IMR-90 (cell line): ENCODE measurements at regions of chr6 and their contacts with region 1.

Region 1: DNA sequence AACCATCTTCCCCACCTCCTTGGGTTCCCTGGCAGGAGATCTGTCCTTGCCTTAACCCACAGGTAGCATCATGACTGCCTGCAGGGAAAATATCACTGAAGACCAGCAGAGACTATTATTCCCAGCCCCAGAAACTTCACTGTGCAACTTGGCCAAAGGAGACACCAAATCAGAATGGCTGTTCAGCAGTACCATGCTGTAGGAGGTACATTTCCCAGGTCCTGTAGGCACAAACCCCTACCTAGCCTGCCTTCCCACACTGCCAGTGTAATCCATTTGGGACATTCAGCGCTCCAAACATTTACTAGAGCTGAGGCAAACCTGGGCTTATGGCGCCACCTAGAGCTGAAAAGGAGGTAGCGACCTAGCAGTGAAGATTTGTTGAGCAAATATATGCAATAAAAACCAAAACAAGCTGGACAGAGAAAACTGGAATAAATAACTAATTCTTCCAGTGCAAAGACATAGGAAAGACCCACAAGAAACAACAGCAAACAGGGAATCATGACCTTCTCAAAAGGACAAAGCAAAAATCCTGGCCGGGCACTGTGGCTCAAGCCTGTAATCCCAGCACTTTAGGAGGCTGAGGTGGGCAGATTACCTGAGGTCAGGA is 60.3 kb downstream of the VTA1 start:
- DNase-seq: peak; percentile 64
- ATAC-seq: peak; percentile 90
- H3K4me3 ChIP-seq: no peak overlapping the region
- H3K27ac ChIP-seq: no peak overlapping the region
- H3K4me1 ChIP-seq: no peaks in the 10 kb centered on the region
- H3K27me3 ChIP-seq: no peaks in the 10 kb centered on the region
- CTCF ChIP-seq: peak; percentile 89
- POLR2A ChIP-seq: no peak
- RAD21 ChIP-seq: peak; percentile 93

Region 2: DNA sequence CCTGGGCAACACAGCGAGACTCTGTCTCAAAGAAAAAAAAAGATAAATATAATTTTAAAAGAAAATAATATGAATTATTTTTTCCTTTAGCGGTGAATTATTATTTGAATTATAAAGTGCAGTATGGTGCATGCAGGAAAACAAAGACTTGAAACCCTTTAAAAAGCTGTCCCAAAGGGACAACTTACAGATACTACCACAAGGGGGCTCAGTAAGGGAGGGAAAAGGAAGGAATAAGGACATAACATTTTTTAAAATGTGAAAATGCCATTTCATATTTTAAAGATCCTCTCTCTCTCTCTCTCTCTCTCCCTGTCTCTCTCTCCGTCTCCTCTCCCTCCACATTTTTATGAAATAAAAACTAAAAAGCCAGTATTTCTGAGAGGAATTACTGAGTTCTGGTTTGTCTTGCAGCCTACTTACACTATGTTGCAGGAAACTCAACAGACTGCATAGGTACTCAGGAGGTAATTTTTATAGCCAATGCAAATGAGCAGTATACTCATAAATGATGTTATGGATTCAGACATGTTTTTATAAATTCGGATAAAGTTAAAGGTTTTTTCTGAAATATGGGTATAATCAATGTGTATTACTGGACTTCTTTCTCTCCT is 529.7 kb before region 1 on chr6:
- CTCF ChIA-PET with region 1: no interaction called
- POLR2A ChIA-PET with region 1: no interaction called
- dilution Hi-C with region 1: no loop called
- in situ Hi-C with region 1: no loop called
- intact Hi-C with region 1: loop called (anchors 2 kb)
- DNase-seq: peak; percentile 47
- ATAC-seq: peak; percentile 70
- H3K4me3 ChIP-seq: no peak overlapping the region
- H3K27ac ChIP-seq: no peak overlapping the region
- H3K4me1 ChIP-seq: no peaks in the 10 kb centered on the region
- H3K27me3 ChIP-seq: no peaks in the 10 kb centered on the region
- CTCF ChIP-seq: peak; percentile 68
- POLR2A ChIP-seq: no peak
- RAD21 ChIP-seq: peak; percentile 58

Region 3: DNA sequence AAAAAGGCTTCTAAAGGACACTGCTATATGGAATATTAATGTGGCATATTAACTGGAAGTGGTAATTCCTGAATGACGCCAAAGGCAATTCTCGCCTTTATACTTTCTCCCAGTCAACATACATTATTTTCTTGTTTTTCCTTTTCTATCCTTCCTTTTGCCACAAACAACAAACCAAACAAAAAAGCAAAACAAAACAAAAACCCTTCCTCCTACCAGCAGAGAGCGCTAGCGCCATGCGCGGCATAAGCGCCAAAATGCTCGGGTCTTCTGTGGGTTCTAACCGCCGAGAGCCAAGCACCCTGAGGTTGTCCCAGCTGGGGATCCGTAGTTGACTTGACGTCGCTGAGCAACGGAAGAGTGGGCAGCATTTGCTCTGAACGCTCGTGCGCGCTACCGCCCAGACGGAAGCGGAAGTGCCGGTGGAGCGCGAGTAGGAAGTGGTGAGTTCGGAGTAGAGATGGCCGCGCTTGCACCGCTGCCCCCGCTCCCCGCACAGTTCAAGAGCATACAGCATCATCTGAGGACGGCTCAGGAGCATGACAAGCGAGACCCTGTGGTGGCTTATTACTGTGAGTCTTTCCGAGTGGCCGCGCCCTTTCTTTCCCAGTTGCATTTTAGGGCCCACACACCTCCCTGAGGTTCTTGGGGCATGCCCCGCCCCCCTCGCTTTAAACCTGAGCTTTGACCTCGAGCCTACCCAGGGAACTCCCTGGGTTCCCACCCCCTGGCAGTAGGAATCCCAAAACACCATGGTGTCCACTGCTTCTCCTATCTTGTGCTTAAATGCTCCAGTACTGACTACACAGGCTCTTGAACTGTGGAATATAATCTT is 60.3 kb before region 1 on chr6 and contains the starts of genes NMBR and VTA1:
- CTCF ChIA-PET with region 1: interaction called, 5 read pairs
- POLR2A ChIA-PET with region 1: no interaction called
- dilution Hi-C with region 1: no loop called
- in situ Hi-C with region 1: loop called (anchors 10 kb)
- intact Hi-C with region 1: loop called (anchors 1 kb)
- DNase-seq: peak; percentile 100
- ATAC-seq: peak; percentile 97
- H3K4me3 ChIP-seq: peak within 1 kb of the TSS; percentile 77
- H3K27ac ChIP-seq: peak within 1 kb of the TSS; percentile 78
- H3K4me1 ChIP-seq: peaks cover 6% of the 10 kb centered on the region
- H3K27me3 ChIP-seq: no peaks in the 10 kb centered on the region
- CTCF ChIP-seq: peak; percentile 97
- POLR2A ChIP-seq: peak; percentile 56; the same call in 1 of the 2 replicates
- RAD21 ChIP-seq: peak; percentile 91
- total RNA-seq, gene NMBR: not detected in 2 replicates
- total RNA-seq, gene VTA1: 104 and 120 TPM in 2 replicates

Region 4: GRCh38 chr6:142236691-142237090 is 29.3 kb after region 1 on chr6:
- CTCF ChIA-PET with region 1: interaction called, 11 read pairs
- POLR2A ChIA-PET with region 1: no interaction called
- dilution Hi-C with region 1: no loop called
- in situ Hi-C with region 1: no loop called
- intact Hi-C with region 1: no loop called
- DNase-seq: no peak
- ATAC-seq: no peak
- H3K4me3 ChIP-seq: no peak overlapping the region
- H3K27ac ChIP-seq: no peak overlapping the region
- H3K4me1 ChIP-seq: no peaks in the 10 kb centered on the region
- H3K27me3 ChIP-seq: no peaks in the 10 kb centered on the region
- CTCF ChIP-seq: no peak
- POLR2A ChIP-seq: no peak
- RAD21 ChIP-seq: no peak

Region 5: DNA sequence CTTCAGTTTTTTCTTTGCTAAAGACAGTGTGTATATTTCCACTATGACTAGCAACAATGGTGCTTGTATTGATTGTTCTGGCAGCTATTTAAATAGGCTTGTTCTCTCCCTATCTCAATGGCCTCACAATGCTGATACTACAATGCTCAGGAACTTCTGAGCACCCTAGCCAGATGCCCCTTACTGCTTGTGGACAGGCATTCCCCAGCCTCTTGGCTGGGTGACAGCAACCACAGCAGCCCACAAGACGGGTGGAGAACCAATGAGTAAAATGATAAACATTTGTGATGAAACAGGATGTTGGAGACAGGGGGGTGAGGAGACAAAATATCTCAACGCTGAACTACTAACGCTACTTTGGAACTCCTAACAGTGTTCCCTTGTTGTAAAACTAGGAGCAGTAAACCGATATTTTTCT is 695.3 kb after region 1 on chr6:
- CTCF ChIA-PET with region 1: no interaction called
- POLR2A ChIA-PET with region 1: interaction called, 17 read pairs
- dilution Hi-C with region 1: no loop called
- in situ Hi-C with region 1: no loop called
- intact Hi-C with region 1: no loop called
- DNase-seq: peak; percentile 99
- ATAC-seq: peak; percentile 88
- H3K4me3 ChIP-seq: no peak overlapping the region
- H3K27ac ChIP-seq: no peak overlapping the region
- H3K4me1 ChIP-seq: peaks cover 19% of the 10 kb centered on the region
- H3K27me3 ChIP-seq: no peaks in the 10 kb centered on the region
- CTCF ChIP-seq: no peak
- POLR2A ChIP-seq: peak; percentile 78; the same call in 1 of the 2 replicates
- RAD21 ChIP-seq: peak; percentile 28; the same call in 1 of the 2 replicates